Posterior cingulate gyrus (tissue), 11 donors: ENCODE measurements at regions of chr12 and their contacts with region 1.

Region 1: GRCh38 chr12:10562306-10562933 is 51.0 kb downstream of the MAGOHB start:
- DNase-seq: peak in 1 of 10 donors; percentile 14

Region 2: DNA sequence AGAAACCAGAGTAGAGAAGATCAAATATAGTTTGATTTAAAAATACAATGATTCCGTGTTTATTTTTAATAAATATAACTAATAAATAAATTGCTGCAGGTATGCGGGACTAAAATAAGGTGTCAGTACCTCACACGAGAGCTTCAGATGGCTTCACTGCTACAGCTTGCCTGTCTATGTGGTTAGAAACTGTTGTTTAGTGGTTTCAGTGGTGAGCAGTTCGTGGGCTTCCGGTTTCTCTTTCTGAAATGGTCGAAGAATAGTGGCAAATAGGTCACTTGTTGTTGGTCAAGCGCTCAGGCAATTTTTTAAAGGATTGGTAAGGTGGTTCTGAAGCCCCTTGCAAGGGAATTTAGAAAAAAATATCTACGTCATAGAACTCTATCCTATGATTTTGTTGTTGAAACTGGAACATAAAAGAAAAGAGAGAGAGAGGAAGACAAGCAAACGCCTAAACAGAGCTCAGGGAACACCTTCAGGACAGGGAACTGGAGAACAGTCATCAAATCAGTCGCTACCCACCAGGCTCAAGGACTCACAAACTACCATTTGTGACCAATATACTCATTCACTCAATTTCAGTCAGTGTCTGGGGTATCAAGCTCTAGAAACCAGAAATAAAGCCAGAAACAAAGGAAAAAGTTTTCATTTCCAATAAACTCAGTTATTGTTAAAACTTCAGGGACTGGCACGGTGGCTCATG is 318.5 kb before region 1 on chr12:
- intact Hi-C with region 1: loop called (anchors 1 kb)
- DNase-seq: no peak

Region 3: DNA sequence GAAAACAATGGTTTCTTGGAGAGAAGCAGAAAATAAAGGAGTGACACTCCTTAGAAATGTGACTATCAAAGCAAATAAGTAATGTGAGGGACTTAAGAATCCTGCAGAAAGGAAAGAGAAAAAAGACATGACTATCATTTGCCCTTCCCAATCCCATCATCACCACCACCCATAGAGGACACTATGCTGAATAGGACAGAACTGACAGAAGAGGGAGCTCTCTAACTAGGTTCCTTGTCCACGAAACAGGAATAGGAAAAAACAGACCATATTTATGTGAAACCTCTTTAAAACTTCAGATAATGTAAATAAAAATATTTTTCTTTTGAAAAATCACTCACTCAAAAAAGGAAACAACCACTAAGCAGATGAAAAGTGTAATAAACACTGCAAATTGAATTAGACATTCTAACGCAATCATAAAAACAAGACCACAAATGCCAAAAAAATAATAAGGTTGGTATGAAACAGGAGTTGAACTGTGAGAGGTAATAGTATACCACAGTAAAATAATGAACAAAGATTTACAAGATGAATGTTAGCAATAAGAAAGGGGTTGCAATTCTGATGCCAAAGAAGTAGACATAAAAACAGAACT is 230.7 kb before region 1 on chr12:
- intact Hi-C with region 1: loop called (anchors 1 kb)
- DNase-seq: no peak